HepG2 (cell line): ENCODE measurements at regions of chr9 and their contacts with region 1.

Region 1: DNA sequence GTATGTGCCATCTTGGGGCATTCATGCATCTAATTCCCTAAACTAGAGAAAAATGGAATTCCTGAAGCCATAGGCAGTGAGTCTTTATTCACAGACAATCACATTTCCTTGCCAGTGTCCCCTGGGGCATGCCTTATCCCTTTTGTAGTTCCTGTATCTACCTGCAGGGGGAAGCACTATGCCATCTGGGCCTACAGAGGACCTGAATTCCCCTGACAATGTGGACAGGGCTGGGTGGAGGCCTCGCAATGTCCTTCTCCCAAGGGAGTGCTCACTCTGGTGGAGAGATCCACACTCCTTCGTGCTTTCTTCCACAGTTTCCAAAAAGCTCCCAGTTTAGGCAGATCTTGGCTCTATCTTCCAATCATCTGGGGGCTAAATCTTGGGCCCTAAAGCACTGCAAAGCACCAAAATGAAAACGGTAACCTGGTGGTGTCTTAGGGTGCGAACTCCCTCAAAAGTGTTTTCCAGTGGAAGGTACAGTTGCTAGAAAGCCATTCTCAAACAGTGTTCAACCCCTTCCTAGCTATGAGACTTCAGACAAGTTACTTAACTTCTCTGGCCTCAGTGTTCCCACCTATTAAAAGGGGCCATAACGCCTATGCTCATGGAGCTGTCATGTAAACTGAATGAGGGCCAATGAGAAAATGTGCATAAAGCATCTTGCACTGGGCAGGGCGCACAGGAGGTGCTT is 17.5 kb downstream of the WHRN start:
- DNase-seq: peak; percentile 71
- ATAC-seq: peak; percentile 99
- H3K4me3 ChIP-seq: no peak overlapping the region
- H3K27ac ChIP-seq: no peak overlapping the region
- H3K4me1 ChIP-seq: no peaks in the 10 kb centered on the region
- H3K27me3 ChIP-seq: no peaks in the 10 kb centered on the region
- CTCF ChIP-seq: peak; percentile 94
- EP300 ChIP-seq: no peak
- POLR2A ChIP-seq: no peak
- RAD21 ChIP-seq: peak; percentile 80

Region 2: DNA sequence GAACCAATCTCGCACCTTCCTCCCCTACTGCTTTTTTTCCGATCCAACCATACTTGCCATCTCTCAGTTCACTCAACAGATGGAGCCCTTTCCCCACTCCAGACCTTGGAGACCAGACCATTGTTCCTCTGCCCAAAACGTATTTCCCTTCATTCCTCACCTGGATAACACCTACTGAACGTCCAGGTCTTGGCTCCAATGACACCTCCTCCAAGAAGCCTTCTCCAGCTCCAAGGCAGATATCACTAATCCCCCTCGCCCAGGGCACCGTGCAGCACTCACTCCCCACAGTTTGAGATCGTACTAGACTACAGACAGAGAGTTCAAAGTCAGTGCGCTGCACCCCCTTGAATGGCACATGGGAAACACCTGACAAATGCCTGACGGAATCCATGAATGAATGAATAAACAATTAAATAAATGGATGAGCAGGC is 52.9 kb before region 1 on chr9:
- CTCF ChIA-PET with region 1: no interaction called
- POLR2A ChIA-PET with region 1: no interaction called
- in situ Hi-C with region 1: no loop called
- intact Hi-C with region 1: loop called (anchors 2 kb)
- DNase-seq: peak; percentile 33
- ATAC-seq: peak; percentile 87
- H3K4me3 ChIP-seq: no peak overlapping the region
- H3K27ac ChIP-seq: no peak overlapping the region
- H3K4me1 ChIP-seq: peaks cover 29% of the 10 kb centered on the region
- H3K27me3 ChIP-seq: no peaks in the 10 kb centered on the region
- CTCF ChIP-seq: peak; percentile 89
- EP300 ChIP-seq: no peak
- POLR2A ChIP-seq: no peak
- RAD21 ChIP-seq: peak; percentile 75

Region 3: GRCh38 chr9:114611516-114612271 is 123.9 kb after region 1 on chr9:
- CTCF ChIA-PET with region 1: no interaction called
- POLR2A ChIA-PET with region 1: no interaction called
- in situ Hi-C with region 1: no loop called
- intact Hi-C with region 1: loop called (anchors 5 kb)
- DNase-seq: no peak
- ATAC-seq: peak; percentile 78
- H3K4me3 ChIP-seq: peak overlapping the region; percentile 61 to 82 (median 72)
- H3K27ac ChIP-seq: peak overlapping the region; percentile 49
- H3K4me1 ChIP-seq: peaks cover 40% of the 10 kb centered on the region
- H3K27me3 ChIP-seq: no peaks in the 10 kb centered on the region; a peak in 1 of 5 replicates
- CTCF ChIP-seq: no peak
- EP300 ChIP-seq: no peak
- POLR2A ChIP-seq: no peak
- RAD21 ChIP-seq: no peak